ENCODE measurements at regions of chr3 and their contacts with region 1.

Region 1: DNA sequence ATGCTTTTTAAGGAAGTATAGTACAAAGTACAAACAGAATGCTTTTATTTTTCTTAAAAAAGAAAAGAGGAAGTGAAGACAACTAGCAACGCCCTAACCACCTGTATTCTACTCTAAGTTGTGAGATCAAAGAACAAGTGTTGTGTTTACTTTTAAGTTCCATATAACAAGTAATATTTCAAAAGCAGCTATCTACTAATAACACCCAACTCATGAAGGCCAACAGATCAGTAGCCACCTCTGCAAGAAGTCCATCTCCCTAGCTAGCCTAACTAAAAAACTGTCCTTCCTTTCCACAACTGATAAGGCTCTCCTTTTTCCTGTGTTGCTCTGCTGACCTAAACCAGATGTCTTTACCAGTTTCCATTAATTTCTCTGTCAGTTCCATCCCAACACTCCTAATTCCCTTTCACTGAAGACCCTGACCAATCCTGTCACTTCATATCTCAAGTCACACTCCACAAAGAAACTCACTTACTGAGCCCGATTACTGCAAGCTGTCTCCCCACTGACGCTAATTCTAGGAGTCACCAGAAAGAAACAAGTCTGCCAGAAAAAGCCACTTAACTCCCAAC is 26.9 kb downstream of the PHC3 start:
- DNase-seq: no peak
- ATAC-seq: no peak
- H3K4me3 ChIP-seq: no peak overlapping the region
- H3K27ac ChIP-seq: peak overlapping the region in 2 of 10 donors; percentile 11 to 68
- H3K4me1 ChIP-seq: peaks cover 0 to 33% (median 19%) of the 10 kb centered on the region in 9 donors
- H3K27me3 ChIP-seq: no peaks in the 10 kb centered on the region
- CTCF ChIP-seq: no peak

Region 2: GRCh38 chr3:169264711-169265110 is 889.9 kb before region 1 on chr3:
- intact Hi-C with region 1: no loop called
- DNase-seq: peak in 1 of 2 donors; percentile 66
- ATAC-seq: peak in 7 of 8 donors; percentile 75 to 90 (median 77)
- H3K4me3 ChIP-seq: no peak overlapping the region
- H3K27ac ChIP-seq: peak overlapping the region in 1 of 10 donors; percentile 11
- H3K4me1 ChIP-seq: peaks cover 5 to 42% (median 20%) of the 10 kb centered on the region in 9 donors
- H3K27me3 ChIP-seq: no peaks in the 10 kb centered on the region
- CTCF ChIP-seq: no peak

Region 3: GRCh38 chr3:170144437-170144843 is 10.2 kb before region 1 on chr3:
- intact Hi-C with region 1: loop called in 1 of 10 experiments (anchors 1 kb)
- DNase-seq: no peak
- ATAC-seq: no peak
- H3K4me3 ChIP-seq: no peak overlapping the region
- H3K27ac ChIP-seq: no peak overlapping the region
- H3K4me1 ChIP-seq: peaks cover 0 to 19% (median 4%) of the 10 kb centered on the region in 9 donors
- H3K27me3 ChIP-seq: no peaks in the 10 kb centered on the region
- CTCF ChIP-seq: no peak

Region 4: GRCh38 chr3:170418422-170419398 is 264.1 kb after region 1 on chr3 and contains the start of gene CLDN11:
- intact Hi-C with region 1: no loop called
- DNase-seq: peak; percentile 10 to 37
- ATAC-seq: peak; percentile 55 to 75 (median 64)
- H3K4me3 ChIP-seq: peak within 1 kb of the TSS; percentile 13 to 63 (median 48)
- H3K27ac ChIP-seq: peak within 1 kb of the TSS in 7 of 10 donors; percentile 2 to 79 (median 54)
- H3K4me1 ChIP-seq: peaks cover 12 to 39% (median 28%) of the 10 kb centered on the region in 9 donors
- H3K27me3 ChIP-seq: peaks cover 0 to 53% (median 39%) of the 10 kb centered on the region in 7 donors
- CTCF ChIP-seq: peak in 1 of 9 donors; percentile 7
- total RNA-seq, gene CLDN11: 1.6 to 3.9 (median 2.8) TPM

Region 5: GRCh38 chr3:171548917-171549316 is 1394.3 kb after region 1 on chr3:
- intact Hi-C with region 1: no loop called
- DNase-seq: no peak
- ATAC-seq: no peak
- H3K4me3 ChIP-seq: no peak overlapping the region
- H3K27ac ChIP-seq: no peak overlapping the region
- H3K4me1 ChIP-seq: peaks cover 0 to 19% (median 0%) of the 10 kb centered on the region in 9 donors
- H3K27me3 ChIP-seq: no peaks in the 10 kb centered on the region
- CTCF ChIP-seq: no peak